ENCODE measurements at regions of chr17 and their contacts with region 1.

Region 1: GRCh38 chr17:56679115-56679766 is 85.7 kb downstream of the NOG start:
- DNase-seq: no peak
- H3K4me3 Mint-ChIP-seq: no peak overlapping the region
- H3K27ac Mint-ChIP-seq: no peak overlapping the region
- H3K4me1 Mint-ChIP-seq: peaks cover 15% of the 10 kb centered on the region
- H3K27me3 Mint-ChIP-seq: peaks cover 52% of the 10 kb centered on the region

Region 2: DNA sequence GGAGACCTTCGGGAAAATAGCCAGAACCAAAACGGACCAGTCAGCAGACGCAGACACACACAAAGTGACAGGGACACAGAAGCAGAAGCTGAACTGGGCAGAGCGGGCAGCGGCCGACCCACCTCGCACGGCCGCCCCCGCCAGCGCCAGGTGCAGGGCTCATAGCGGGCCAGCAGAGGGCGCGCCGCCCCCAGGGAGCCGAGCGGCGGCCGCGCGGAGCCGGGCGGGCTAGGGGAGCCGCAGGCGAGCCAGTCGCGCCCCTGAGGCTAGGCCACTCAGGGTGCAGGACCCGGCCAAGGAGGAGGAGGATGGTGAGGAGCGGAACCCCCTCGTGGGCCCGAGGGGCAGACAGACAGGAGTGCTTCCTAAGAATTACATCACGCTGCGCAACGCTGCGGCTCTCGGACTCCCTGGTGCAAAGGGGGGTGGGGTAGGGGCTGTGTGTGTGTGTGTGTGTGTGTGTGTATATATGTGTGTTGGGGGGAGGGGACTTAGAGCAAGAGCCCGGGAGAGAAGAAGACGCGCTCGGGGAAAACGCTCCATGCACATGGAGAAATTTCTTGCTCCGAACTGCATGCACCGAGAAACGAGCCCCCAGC is 86.7 kb before region 1 on chr17:
- CTCF ChIA-PET with region 1: interaction called, 15 read pairs
- DNase-seq: peak; percentile 69
- H3K4me3 Mint-ChIP-seq: peak overlapping the region; percentile 69
- H3K27ac Mint-ChIP-seq: no peak overlapping the region
- H3K4me1 Mint-ChIP-seq: peaks cover 32% of the 10 kb centered on the region
- H3K27me3 Mint-ChIP-seq: peaks cover 87% of the 10 kb centered on the region